ENCODE measurements at regions of chrX and their contacts with region 1.

Region 1: DNA sequence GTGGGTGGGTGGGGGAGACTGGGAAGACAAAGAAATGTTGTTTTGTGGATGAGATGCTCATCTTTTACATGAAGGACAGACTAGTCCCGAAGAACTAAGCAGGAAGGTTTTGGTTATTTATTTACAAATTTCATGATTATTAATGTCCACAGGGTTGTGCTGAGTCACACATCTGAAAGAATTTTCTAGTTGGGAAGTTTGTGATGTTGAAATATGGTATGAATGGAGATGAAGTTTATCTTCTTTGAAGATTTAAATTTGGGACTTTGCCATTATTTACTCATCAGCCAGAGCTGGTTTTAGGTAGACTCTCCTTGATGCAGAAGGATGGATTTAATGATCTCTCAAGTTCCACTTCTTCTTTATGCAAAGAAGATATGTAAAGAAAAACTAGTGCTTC is 75.5 kb downstream of the MOSPD2 start:
- DNase-seq: no peak

Region 2: GRCh38 chrX:13816643-13817627 is 1131.8 kb before region 1 on chrX and contains the start of gene GPM6B:
- intact Hi-C with region 1: loop called in 1 of 2 experiments (anchors 5 kb)
- DNase-seq: no peak
- total RNA-seq, gene GPM6B: 4.1 to 7.6 TPM

Region 3: GRCh38 chrX:14673764-14674163 is 274.9 kb before region 1 on chrX:
- intact Hi-C with region 1: no loop called
- DNase-seq: no peak

Region 4: DNA sequence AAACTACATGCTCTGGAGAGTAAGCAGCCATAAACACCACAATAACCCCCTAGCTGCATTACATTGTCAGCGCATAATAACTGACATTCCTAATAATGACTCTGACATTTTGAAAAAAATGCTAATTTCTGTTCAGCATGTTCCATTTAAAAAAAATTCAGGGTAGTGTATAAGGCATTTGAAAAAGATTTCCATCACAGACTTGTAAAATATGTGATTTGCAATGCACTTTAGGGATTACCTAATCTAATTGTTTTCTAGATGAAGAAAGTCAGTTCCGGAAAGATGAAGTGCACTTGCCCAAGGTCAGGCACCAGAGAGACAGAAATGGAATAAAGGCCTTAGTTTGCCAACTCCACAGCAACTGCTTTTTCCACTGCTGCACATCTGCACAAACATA is 131.1 kb before region 1 on chrX:
- intact Hi-C with region 1: no loop called
- DNase-seq: no peak

Region 5: GRCh38 chrX:14927401-14927800 is 21.3 kb before region 1 on chrX:
- intact Hi-C with region 1: loop called in 1 of 2 experiments (anchors 1 kb)
- DNase-seq: no peak